Activated CD4-positive, alpha-beta T cell treated with anti-CD3 and anti-CD28 coated beads, Interleukin-2, amount 10 ng/mL, durations not matched to agents 7 days and 5 days (primary cell): ENCODE measurements at regions of chr9 and their contacts with region 1.

Region 1: GRCh38 chr9:109463924-109464625 is 34.0 kb downstream of the PTPN3 start:
- DNase-seq: peak; percentile 24
- H3K4me3 Mint-ChIP-seq: no peak overlapping the region
- H3K27ac Mint-ChIP-seq: no peak overlapping the region
- H3K4me1 Mint-ChIP-seq: peaks cover 30% of the 10 kb centered on the region
- H3K27me3 Mint-ChIP-seq: peaks cover 6% of the 10 kb centered on the region

Region 2: GRCh38 chr9:109448223-109448622 is 15.9 kb before region 1 on chr9:
- CTCF ChIA-PET with region 1: interaction called, 52 read pairs
- POLR2A ChIA-PET with region 1: no interaction called
- DNase-seq: no peak
- H3K4me3 Mint-ChIP-seq: no peak overlapping the region
- H3K27ac Mint-ChIP-seq: no peak overlapping the region
- H3K4me1 Mint-ChIP-seq: peaks cover 20% of the 10 kb centered on the region
- H3K27me3 Mint-ChIP-seq: peaks cover 16% of the 10 kb centered on the region